IMR-90 (cell line): ENCODE measurements at regions of chr2 and their contacts with region 1.

Region 1: DNA sequence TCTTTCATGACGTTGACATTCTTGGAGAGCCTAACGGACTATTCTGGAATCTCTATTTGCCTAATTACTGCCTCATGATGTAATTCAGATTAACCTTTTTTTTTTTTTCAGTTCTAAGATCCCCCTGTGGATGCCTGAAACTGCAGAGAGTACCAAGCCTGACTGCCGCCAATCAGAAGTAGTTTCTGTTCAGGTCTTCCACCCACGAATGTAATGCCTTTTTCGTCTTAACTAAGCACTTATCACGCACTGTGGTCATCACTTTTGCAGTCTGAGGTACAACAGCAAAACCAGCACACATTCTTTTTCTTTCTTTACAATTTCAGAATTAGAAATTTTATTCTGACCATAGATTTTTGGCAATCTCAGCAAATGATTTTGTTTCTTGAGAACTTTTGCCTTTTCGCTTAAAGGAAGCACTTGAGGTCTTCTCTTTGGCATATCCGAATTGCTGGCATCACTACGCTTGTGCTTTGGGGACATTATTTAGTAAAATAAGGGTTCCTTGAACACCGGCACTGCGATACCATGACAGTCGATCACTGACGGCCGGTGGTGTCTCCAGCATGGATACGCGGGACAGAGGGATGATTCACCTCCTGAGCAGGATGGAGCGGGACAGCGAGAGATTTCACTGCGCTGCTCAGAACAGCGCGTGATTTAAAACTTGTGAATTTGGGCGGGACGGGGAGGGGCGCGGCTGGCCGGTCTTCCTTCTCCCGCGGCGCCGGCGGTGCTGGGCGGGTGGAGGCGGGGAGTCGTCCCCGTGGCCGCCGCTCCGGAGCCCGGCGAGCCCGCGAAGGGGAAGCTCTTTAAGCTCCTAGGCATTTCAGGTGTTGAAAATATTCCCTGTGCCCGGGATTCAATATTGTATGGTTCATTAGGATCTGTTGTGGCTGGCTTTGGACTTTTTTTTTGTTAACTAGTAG is 32.0 kb upstream of the GPR55 start:
- DNase-seq: peak; percentile 49
- ATAC-seq: peak; percentile 95
- H3K4me3 ChIP-seq: peak overlapping the region; percentile 9
- H3K27ac ChIP-seq: no peak overlapping the region
- H3K4me1 ChIP-seq: no peaks in the 10 kb centered on the region
- H3K27me3 ChIP-seq: peaks cover 40% of the 10 kb centered on the region
- CTCF ChIP-seq: no peak
- POLR2A ChIP-seq: no peak
- RAD21 ChIP-seq: no peak

Region 2: GRCh38 chr2:230582851-230583283 is 374.2 kb before region 1 on chr2:
- CTCF ChIA-PET with region 1: no interaction called
- POLR2A ChIA-PET with region 1: no interaction called
- dilution Hi-C with region 1: no loop called
- in situ Hi-C with region 1: no loop called
- intact Hi-C with region 1: no loop called
- DNase-seq: peak; percentile 21
- ATAC-seq: no peak
- H3K4me3 ChIP-seq: no peak overlapping the region
- H3K27ac ChIP-seq: no peak overlapping the region
- H3K4me1 ChIP-seq: no peaks in the 10 kb centered on the region
- H3K27me3 ChIP-seq: peaks cover 7% of the 10 kb centered on the region
- CTCF ChIP-seq: no peak
- POLR2A ChIP-seq: no peak
- RAD21 ChIP-seq: no peak

Region 3: GRCh38 chr2:231017231-231017598 is 60.1 kb after region 1 on chr2:
- CTCF ChIA-PET with region 1: no interaction called
- POLR2A ChIA-PET with region 1: no interaction called
- dilution Hi-C with region 1: no loop called
- in situ Hi-C with region 1: no loop called
- intact Hi-C with region 1: loop called (anchors 10 kb)
- DNase-seq: no peak
- ATAC-seq: no peak
- H3K4me3 ChIP-seq: no peak overlapping the region
- H3K27ac ChIP-seq: no peak overlapping the region
- H3K4me1 ChIP-seq: no peaks in the 10 kb centered on the region
- H3K27me3 ChIP-seq: peaks cover 39% of the 10 kb centered on the region
- CTCF ChIP-seq: no peak
- POLR2A ChIP-seq: no peak
- RAD21 ChIP-seq: no peak